ENCODE measurements at regions of chr12 and their contacts with region 1.

Region 1: DNA sequence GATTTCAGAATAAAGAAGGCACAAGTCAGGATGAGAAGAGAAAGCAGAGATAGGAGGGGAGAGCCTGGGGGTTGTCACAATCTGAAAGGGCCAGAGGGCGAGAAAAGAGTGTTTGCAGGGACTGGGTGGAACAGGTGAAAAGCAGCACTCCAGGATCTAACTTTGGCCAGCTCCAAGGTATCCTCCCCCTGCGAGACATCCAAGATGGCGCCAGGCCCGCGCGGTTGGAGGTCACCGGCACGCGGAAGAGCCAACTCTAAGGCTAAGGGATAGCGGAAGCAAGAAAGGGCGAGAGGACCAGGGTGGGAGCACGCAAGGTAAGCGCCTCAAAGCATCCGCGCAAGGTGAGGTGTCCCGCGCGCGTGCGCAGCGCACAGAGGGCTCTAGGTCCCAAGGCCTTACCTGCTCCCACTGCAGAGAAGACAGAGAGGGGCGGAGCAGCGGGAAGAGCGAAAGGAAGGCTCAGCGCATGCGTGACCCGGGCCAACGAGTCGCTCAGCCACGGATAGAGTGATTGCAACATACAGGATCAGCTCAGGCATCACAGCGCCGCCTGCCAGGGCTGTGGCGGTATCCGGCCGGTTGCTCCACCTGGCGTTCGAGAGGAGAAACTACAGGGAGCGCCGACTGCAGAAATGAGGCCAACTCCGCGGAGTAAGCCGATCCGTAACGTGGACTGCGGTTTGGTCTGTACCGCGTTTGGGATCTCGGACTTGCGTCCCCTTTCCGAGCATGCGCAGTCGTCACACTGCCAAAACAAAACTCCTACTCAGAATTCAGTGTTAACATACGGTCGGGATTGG is at the start of gene ATP5MC2:
- DNase-seq: peak; percentile 99
- ATAC-seq: peak; percentile 96
- H3K4me3 Mint-ChIP-seq: peak within 1 kb of the TSS; percentile 93
- H3K27ac Mint-ChIP-seq: peak within 1 kb of the TSS; percentile 95
- H3K4me1 Mint-ChIP-seq: peaks cover 29% of the 10 kb centered on the region
- H3K27me3 Mint-ChIP-seq: peaks cover 20% of the 10 kb centered on the region
- total RNA-seq, gene ATP5MC2: 356 to 415 TPM

Region 2: DNA sequence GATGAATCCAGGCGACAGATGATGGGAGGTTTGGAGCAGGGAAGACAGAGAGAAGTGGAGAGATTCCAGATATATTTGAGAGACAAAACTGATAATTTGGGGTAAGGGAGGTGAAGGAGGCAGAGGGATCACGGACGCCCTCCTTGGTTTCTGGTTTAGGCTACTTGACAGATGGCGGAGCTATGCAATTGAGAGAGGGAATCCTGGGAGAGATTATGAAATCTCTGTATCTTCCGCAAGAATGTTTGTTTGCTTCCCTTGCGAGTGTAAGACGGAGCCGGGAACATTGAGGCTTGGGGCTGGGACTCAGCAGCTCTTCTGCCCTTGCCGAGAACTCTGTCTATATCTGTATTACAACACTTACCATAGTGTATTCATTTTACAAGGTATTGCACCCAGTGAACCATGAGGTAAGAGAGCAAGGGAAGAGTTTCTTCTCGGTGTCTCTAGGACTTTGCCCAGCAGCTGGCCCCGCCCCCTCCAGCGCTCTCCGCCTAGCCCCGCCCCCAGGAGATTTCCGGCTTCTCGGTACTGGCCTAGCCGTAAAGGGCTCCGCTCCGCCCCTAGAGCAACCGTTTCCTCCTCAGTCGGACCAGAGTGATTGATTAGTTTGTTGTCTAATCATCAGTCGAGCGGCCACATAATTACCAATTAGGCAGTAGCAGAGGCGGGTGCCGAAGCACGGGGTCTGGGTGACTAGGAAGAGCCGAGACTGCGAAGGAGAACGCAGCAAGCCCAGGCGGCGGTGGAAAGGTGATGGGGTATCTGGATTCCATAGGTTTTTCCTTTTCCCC is 234.6 kb before region 1 on chr12 and contains the start of gene PRR13:
- CTCF ChIA-PET with region 1: no interaction called
- POLR2A ChIA-PET with region 1: no interaction called
- intact Hi-C with region 1: loop called in 1 of 2 experiments (anchors 1 kb)
- DNase-seq: peak; percentile 100
- ATAC-seq: peak; percentile 99
- H3K4me3 Mint-ChIP-seq: peak within 1 kb of the TSS; percentile 92
- H3K27ac Mint-ChIP-seq: peak within 1 kb of the TSS; percentile 95
- H3K4me1 Mint-ChIP-seq: peaks cover 30% of the 10 kb centered on the region
- H3K27me3 Mint-ChIP-seq: no peaks in the 10 kb centered on the region
- total RNA-seq, gene PRR13: 250 to 266 TPM

Region 3: DNA sequence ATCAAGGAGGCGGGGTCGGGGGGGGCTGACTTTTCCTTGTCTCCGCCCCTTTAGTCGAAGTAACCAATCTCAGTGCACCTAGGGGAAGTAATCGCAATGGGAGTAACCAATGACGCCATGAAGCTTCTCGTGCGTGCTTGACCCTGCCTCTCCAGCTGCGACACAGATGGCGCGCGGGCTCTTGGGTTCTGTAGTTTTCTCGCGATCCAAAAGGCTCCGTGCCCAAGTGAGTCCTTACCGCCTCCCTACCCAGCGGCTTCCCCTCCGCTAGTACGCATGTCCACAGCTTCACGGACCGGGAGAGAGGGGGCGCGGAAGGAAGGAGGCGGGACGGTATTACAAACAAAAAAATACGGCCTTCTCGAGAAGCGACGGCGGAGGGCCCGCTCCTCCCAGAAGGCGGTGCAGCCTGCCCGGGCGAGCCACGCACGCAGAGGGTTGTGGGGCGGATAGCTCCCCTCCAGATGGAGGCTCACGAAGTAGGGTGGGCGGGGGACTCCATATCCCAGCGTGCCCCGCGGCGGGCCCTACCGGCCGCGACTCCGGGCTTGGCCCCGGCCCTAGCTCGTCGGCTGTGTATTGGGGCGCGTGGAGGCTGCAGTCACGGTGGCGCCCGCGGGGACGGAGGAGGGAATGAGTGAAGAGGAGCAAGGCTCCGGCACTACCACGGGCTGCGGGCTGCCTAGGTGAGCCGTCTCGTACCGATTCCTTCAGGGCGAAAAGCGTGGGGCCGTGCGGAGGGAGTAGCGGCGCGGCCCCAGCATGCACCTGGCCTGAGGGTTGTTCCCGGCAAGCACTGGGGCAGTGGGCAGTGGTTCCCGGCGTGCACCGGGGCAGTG is 174.9 kb before region 1 on chr12 and contains the start of gene TARBP2:
- CTCF ChIA-PET with region 1: interaction called, 6 read pairs
- POLR2A ChIA-PET with region 1: interaction called, 3 read pairs
- intact Hi-C with region 1: loop called in 1 of 2 experiments (anchors 1 kb)
- DNase-seq: peak; percentile 98
- ATAC-seq: peak; percentile 84
- H3K4me3 Mint-ChIP-seq: peak within 1 kb of the TSS; percentile 81
- H3K27ac Mint-ChIP-seq: peak within 1 kb of the TSS; percentile 98
- H3K4me1 Mint-ChIP-seq: peaks cover 31% of the 10 kb centered on the region
- H3K27me3 Mint-ChIP-seq: no peaks in the 10 kb centered on the region
- total RNA-seq, gene TARBP2: 28.3 to 30.2 TPM

Region 4: GRCh38 chr12:53543539-53543938 is 132.3 kb before region 1 on chr12:
- CTCF ChIA-PET with region 1: interaction called, 103 read pairs
- POLR2A ChIA-PET with region 1: interaction called, 5 read pairs
- intact Hi-C with region 1: loop called (anchors 1 kb)
- DNase-seq: peak; percentile 79
- ATAC-seq: peak; percentile 99
- H3K4me3 Mint-ChIP-seq: no peak overlapping the region
- H3K27ac Mint-ChIP-seq: peak overlapping the region; percentile 78
- H3K4me1 Mint-ChIP-seq: peaks cover 20% of the 10 kb centered on the region
- H3K27me3 Mint-ChIP-seq: no peaks in the 10 kb centered on the region

Region 5: GRCh38 chr12:53727310-53728041 is 51.6 kb after region 1 on chr12 and contains the start of gene CALCOCO1:
- CTCF ChIA-PET with region 1: interaction called, 7 read pairs
- POLR2A ChIA-PET with region 1: no interaction called
- intact Hi-C with region 1: loop called in 1 of 2 experiments (anchors 1 kb)
- DNase-seq: peak; percentile 99
- ATAC-seq: peak; percentile 99
- H3K4me3 Mint-ChIP-seq: peak within 1 kb of the TSS; percentile 80
- H3K27ac Mint-ChIP-seq: peak within 1 kb of the TSS; percentile 73
- H3K4me1 Mint-ChIP-seq: peaks cover 20% of the 10 kb centered on the region
- H3K27me3 Mint-ChIP-seq: no peaks in the 10 kb centered on the region
- total RNA-seq, gene CALCOCO1: 17.1 to 20.4 TPM

Region 6: GRCh38 chr12:54191550-54192022 is 515.7 kb after region 1 on chr12:
- CTCF ChIA-PET with region 1: interaction called, 3 read pairs
- POLR2A ChIA-PET with region 1: no interaction called
- intact Hi-C with region 1: loop called in 1 of 2 experiments (anchors 5 kb)
- DNase-seq: peak; percentile 87
- ATAC-seq: peak; percentile 60
- H3K4me3 Mint-ChIP-seq: no peak overlapping the region
- H3K27ac Mint-ChIP-seq: no peak overlapping the region
- H3K4me1 Mint-ChIP-seq: peaks cover 17% of the 10 kb centered on the region
- H3K27me3 Mint-ChIP-seq: peaks cover 35% of the 10 kb centered on the region

Measured in activated CD4-positive, alpha-beta T cell treated with anti-CD3 and anti-CD28 coated beads for 36 hours (primary cell).